AG04450 (cell line): ENCODE measurements at regions of chr18 and their contacts with region 1.

Region 1: DNA sequence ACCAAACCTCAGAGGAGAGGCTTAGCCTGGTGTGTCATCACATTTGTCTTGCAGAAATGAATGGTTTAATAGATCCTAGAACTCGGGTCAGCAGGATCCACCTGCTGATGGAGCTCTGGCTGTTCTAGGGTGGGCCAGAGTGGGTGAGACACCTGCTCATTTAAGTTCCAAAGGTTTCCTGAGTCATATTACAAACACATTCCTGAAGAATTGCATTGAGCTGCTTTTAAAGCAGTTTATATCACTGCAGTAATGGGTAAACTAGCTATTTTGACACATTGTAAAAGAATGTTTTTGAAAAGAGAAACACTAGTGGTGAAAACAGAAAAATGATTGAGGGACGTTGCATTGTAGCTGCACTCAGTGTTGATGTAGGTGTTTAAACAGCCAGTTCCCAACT is 175.3 kb upstream of the TCF4 start:
- DNase-seq: peak; percentile 42
- H3K4me3 ChIP-seq: no peak overlapping the region
- H3K27ac ChIP-seq: no peak overlapping the region
- H3K27me3 ChIP-seq: no peaks in the 10 kb centered on the region
- CTCF ChIP-seq: no peak

Region 2: DNA sequence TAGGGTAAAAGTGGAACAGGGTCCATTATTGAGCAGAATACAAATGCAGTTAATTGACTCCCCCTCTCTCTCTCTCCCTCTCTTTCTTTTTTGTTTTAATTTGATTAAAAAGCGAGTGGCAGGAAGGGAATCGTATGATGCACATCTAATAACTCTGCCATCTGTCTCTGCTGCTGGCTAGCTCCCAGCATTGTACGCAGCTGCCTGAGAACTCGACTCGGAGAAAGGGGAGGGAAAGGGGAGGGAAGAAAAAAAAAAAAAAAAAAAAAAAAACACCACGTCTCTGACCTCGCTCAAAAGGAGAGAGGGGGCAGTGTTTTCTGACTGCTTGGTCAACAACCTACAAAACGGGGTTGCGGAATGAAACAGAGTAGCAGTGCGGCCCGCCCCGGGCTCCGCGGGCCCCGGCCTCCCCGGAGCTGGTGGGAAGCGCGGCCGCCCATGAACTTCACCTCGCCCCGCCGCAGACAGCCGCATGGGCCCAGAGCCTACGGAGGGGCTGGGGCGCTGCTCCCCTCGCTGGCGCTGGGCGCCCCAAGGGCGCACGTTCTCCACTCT is 441.0 kb before region 1 on chr18:
- CTCF ChIA-PET with region 1: no interaction called
- POLR2A ChIA-PET with region 1: interaction called, 17 read pairs
- DNase-seq: peak; percentile 88
- H3K4me3 ChIP-seq: peak overlapping the region; percentile 68
- H3K27ac ChIP-seq: peak overlapping the region; percentile 88
- H3K27me3 ChIP-seq: no peaks in the 10 kb centered on the region
- CTCF ChIP-seq: 0 out of 2 replicates have a peak, but pooled peaks have one; percentile 9

Region 3: GRCh38 chr18:55654986-55655385 is 108.3 kb before region 1 on chr18:
- CTCF ChIA-PET with region 1: no interaction called
- POLR2A ChIA-PET with region 1: no interaction called
- DNase-seq: no peak
- H3K4me3 ChIP-seq: no peak overlapping the region
- H3K27ac ChIP-seq: no peak overlapping the region
- H3K27me3 ChIP-seq: peaks cover 2% of the 10 kb centered on the region
- CTCF ChIP-seq: no peak